ENCODE measurements at regions of chr10 and their contacts with region 1.

Region 1: DNA sequence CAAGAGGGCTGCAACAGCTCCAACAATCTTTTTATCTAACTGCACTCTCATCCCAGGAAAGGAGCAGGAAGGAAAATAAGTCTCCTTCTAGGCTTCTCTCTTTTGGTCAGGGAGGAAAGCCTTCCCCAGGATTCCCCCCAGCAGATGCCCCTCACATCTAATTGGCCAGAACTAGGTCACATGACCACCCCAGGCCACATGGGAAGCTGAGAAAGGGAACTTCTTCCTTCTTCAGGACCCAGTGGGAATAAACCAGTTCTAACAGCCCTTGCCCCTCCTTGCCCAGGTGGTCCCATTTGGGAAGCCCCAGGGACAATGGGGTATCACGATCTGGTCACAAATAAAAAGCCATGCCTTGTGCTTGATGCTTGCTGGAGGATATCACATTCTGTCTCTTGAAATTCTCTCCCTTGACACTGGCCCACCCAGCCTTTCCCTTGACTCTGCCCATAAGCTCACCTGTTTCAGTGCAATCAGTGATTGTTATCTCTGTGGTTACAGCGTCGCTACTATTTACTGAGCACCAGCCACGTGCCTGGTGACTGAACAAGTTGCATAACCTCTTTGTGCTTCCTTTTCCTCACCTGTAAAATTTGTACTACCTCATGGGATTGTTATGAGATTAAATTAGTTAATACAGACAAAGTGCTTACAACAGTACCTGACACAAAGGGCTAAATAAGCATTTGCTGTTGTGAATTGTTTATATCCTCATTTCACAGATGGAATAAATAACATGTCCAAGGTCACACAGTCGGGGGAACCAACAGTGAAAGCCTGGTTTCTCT is 9.0 kb upstream of the TACR2 start:
- DNase-seq: no peak
- H3K4me3 ChIP-seq: no peak overlapping the region
- H3K27ac ChIP-seq: peak overlapping the region in 3 of 4 donors; percentile 35 to 70 (median 66)
- H3K4me1 ChIP-seq: peaks cover 0 to 34% (median 12%) of the 10 kb centered on the region in 3 donors
- H3K27me3 ChIP-seq: no peaks in the 10 kb centered on the region
- CTCF ChIP-seq: no peak
- POLR2A ChIP-seq: no peak

Region 2: DNA sequence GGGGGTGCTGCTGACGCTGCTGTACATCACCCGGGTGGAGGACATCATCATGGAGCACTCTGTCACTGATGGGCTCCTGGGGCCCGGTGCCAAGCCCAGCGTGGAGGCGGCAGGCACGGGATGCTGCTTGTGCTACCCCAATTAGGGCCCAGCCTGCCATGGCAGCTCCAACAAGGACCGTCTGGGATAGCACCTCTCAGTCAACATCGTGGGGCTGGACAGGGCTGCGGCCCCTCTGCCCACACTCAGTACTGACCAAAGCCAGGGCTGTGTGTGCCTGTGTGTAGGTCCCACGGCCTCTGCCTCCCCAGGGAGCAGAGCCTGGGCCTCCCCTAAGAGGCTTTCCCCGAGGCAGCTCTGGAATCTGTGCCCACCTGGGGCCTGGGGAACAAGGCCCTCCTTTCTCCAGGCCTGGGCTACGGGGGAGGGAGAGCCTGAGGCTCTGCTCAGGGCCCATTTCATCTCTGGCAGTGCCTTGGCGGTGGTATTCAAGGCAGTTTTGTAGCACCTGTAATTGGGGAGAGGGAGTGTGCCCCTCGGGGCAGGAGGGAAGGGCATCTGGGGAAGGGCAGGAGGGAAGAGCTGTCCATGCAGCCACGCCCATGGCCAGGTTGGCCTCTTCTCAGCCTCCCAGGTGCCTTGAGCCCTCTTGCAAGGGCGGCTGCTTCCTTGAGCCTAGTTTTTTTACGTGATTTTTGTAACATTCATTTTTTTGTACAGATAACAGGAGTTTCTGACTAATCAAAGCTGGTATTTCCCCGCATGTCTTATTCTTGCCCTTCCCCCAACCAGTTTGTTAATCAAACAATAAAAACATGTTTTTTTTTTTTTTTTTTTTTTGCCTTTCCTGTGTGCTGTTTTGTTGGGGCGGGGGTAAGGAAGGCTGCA is 81.4 kb after region 1 on chr10:
- intact Hi-C with region 1: loop called (anchors 5 kb)
- DNase-seq: no peak
- H3K4me3 ChIP-seq: peak overlapping the region in 3 of 4 donors; percentile 21 to 57 (median 23)
- H3K27ac ChIP-seq: peak overlapping the region; percentile 13 to 67 (median 62)
- H3K4me1 ChIP-seq: peaks cover 0 to 18% (median 9%) of the 10 kb centered on the region in 3 donors
- H3K27me3 ChIP-seq: no peaks in the 10 kb centered on the region
- CTCF ChIP-seq: no peak
- POLR2A ChIP-seq: no peak

Measured in esophagus squamous epithelium (tissue), 5 donors.